ENCODE measurements at regions of chr11 and their contacts with region 1.

Region 1: GRCh38 chr11:19359221-19360000 is 118.7 kb upstream of the E2F8 start:
- DNase-seq: no peak
- H3K4me3 ChIP-seq: no peak overlapping the region
- H3K27ac ChIP-seq: no peak overlapping the region
- H3K4me1 ChIP-seq: no peaks in the 10 kb centered on the region
- H3K27me3 ChIP-seq: no peaks in the 10 kb centered on the region
- CTCF ChIP-seq: no peak

Region 2: DNA sequence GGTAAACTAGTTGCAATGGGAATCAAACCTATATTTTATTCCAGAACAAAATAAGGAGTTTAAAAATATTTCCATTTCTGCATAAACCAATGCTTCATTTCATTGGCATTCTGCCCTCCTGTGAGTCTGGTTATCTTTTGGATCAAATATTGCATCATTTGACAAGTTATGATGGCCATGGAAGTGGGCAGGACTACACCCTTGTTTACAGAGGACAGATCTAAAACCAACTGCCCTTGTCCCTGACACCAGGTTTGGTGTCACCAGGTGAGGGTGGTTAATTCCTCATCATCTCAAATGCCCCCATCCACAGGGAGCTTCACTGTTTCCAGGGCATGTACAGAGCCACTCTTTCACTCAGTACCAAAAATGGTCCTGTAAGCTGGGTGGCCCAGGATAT is 90.5 kb before region 1 on chr11:
- CTCF ChIA-PET with region 1: interaction called, 10 read pairs
- POLR2A ChIA-PET with region 1: no interaction called
- intact Hi-C with region 1: no loop called
- DNase-seq: peak in 1 of 2 experiments; percentile 67
- H3K4me3 ChIP-seq: no peak overlapping the region
- H3K27ac ChIP-seq: no peak overlapping the region
- H3K4me1 ChIP-seq: peaks cover 20% of the 10 kb centered on the region
- H3K27me3 ChIP-seq: no peaks in the 10 kb centered on the region
- CTCF ChIP-seq: no peak

Region 3: GRCh38 chr11:19311308-19312030 is 47.9 kb before region 1 on chr11:
- CTCF ChIA-PET with region 1: no interaction called
- POLR2A ChIA-PET with region 1: no interaction called
- intact Hi-C with region 1: no loop called
- DNase-seq: peak in 1 of 2 experiments; percentile 63
- H3K4me3 ChIP-seq: no peak overlapping the region
- H3K27ac ChIP-seq: no peak overlapping the region
- H3K4me1 ChIP-seq: no peaks in the 10 kb centered on the region; the same call in 1 of the 2 replicates
- H3K27me3 ChIP-seq: no peaks in the 10 kb centered on the region
- CTCF ChIP-seq: peak; percentile 94

Region 4: DNA sequence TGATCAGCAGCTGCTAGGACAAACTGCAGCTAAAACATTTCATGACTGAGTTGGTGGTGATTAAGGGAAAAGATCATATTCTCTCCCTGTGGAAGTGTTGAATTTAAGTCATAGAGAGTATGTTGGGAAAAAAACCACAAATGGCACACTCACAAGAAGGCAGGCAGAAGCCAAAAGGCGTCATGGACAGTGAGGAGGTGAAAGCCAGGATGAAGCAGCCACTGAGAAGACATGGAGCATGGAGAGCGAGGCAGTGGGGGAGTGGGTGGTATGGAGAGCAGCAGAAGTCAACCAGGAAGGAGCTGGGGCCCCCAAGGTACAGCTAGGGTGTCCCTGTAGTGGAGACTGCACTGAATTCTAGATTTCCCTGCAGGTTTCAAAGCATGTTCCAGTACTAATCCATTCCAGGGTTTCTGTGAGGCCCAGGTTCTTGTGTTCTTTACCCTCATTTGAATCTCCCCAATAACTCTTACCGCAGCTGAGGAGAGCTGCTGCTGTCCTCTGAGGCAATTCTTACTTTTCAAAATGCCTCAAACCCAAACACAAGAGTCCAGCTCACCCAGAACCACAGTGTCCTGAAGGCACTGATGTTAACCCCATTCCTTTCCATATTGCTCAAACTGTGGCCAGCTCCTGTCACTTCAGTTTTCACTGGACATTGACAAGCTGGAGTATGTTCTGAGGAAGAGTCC is 73.1 kb after region 1 on chr11:
- CTCF ChIA-PET with region 1: no interaction called
- POLR2A ChIA-PET with region 1: no interaction called
- intact Hi-C with region 1: no loop called
- DNase-seq: peak; percentile 36 to 72
- H3K4me3 ChIP-seq: no peak overlapping the region
- H3K27ac ChIP-seq: peak overlapping the region; percentile 27
- H3K4me1 ChIP-seq: peaks cover 55% of the 10 kb centered on the region
- H3K27me3 ChIP-seq: no peaks in the 10 kb centered on the region
- CTCF ChIP-seq: no peak

Region 5: DNA sequence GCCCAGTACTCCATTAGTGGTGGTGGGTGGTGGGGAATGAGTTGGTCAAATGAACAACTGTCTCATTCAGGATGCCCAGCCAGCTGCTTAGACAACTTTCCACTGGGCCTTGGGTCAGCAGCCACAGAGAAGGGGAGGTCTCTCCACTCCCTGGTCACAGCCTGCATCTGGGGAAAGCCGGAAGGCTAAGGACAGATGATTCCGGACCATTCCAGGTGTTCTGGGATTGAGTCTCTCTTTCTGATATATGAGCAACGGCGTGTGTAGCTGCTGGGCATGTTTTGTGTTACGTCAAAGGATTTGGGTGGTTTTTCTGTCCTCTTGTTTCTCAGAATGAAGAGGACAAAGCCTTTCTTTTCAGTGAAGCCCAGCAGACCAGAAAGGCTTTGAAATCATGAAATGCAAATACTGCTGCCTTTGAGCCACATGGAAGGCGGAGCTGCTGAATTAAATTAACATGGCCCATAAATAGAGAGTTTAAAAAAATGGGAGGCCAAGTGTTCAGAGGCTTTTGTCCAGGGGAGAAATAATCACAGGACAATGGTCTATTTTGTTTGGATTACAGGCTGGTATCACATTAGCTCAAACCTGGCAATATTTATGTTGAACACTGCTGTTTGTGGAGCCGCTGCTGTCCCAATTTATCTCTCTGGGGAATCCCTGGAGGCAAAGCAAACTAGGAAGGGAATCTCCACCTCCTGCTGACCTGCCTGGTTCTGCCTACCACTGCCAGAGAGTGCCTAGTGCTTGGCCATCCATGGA is 115.7 kb after region 1 on chr11:
- CTCF ChIA-PET with region 1: no interaction called
- POLR2A ChIA-PET with region 1: no interaction called
- intact Hi-C with region 1: no loop called
- DNase-seq: no peak
- H3K4me3 ChIP-seq: no peak overlapping the region
- H3K27ac ChIP-seq: no peak overlapping the region
- H3K4me1 ChIP-seq: no peaks in the 10 kb centered on the region
- H3K27me3 ChIP-seq: no peaks in the 10 kb centered on the region
- CTCF ChIP-seq: no peak

Measured in PC-9 (cell line).